ENCODE measurements at regions of chr12 and their contacts with region 1.

Region 1: DNA sequence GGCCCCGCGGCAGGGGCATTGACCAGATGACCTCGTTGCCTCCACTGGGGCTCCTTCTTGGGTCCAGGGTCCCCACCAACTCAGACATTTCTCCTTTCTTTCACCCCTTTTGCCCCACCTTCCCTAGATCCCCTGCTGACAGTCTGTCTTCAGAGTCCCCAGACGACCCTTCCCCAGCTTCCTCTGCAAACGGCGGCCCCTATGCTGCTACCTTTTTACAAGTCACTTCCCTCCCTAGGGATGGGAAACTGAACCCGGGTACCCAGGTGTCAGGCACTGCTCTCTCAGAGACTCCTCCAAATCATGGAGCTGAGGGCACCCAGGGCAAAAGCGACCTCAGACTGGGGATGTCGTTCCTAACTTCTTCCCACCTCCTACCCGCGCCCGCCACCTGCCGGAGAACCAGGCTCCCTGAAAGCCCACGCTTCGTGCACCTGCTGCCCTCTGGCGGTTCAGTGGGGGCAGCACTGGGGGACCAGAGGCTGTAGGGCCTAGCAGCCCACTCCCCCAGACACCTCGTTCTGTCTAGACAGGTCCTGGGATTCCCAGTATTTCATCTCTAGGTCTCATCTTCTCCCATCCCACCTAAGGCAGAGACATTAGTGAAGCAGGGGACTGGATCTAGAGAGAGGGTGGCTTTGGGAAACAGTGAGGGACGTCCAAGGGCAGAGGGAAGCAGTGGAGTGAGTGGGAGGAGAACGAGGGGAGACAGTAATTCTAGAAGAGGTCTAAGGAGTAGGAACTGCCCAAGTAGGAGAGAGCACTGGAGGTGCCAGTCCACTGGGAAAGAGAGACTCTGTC is 4.9 kb downstream of the ZNF385A start:
- DNase-seq: peak in 1 of 2 experiments; percentile 99
- H3K4me3 ChIP-seq: peak overlapping the region; percentile 30 to 54 (median 38); a peak in 6 of 8 replicates
- H3K27ac ChIP-seq: no peak overlapping the region
- H3K4me1 ChIP-seq: peaks cover 3 to 17% (median 12%) of the 10 kb centered on the region in 4 experiments
- H3K27me3 ChIP-seq: peaks cover 0 to 3% (median 1%) of the 10 kb centered on the region in 4 experiments; a peak in 2 of 7 replicates
- CTCF ChIP-seq: peak; percentile 100
- EP300 ChIP-seq: no peak
- POLR2A ChIP-seq: no peak
- RAD21 ChIP-seq: peak; percentile 84 to 90

Region 2: DNA sequence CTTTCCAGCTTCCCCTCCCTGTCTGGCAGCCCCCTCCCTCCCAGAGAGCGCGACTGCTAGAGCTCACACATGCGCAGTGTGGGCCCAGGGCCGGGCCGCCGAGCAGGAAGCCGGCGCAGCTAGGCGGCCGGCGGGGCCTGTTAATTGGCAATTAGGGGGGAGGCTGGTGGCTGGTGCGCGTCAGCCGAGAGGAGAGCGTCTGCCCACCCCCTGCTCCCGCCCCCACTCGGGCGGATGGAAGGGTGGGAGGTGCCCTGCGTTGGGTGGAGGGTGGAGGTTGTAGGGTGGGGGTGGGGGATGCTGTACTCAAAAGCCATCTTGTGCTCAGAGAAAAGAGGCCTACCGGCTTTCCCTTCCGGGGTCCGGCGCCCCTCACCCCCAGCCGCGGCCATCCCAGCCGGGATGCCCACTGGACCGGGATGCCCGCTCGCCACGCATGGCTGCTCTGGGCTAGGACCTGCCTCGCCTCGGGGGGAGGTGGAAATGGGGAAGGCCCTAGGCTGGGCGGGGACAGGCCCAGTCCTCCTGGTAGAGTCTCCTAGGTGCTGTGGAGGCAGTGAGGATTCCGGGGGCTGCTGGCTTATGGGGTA is 361.6 kb before region 1 on chr12:
- CTCF ChIA-PET with region 1: no interaction called
- POLR2A ChIA-PET with region 1: no interaction called
- DNase-seq: peak in 1 of 2 experiments; percentile 83
- H3K4me3 ChIP-seq: peak overlapping the region in 3 of 4 experiments; percentile 9 to 54 (median 26); a peak in 5 of 8 replicates
- H3K27ac ChIP-seq: no peak overlapping the region
- H3K4me1 ChIP-seq: peaks cover 0 to 12% (median 4%) of the 10 kb centered on the region in 4 experiments; a peak in 6 of 7 replicates
- H3K27me3 ChIP-seq: peaks cover 95 to 100% (median 100%) of the 10 kb centered on the region in 4 experiments
- CTCF ChIP-seq: no peak
- EP300 ChIP-seq: no peak
- POLR2A ChIP-seq: no peak
- RAD21 ChIP-seq: no peak

Region 3: GRCh38 chr12:54279866-54280467 is 99.6 kb before region 1 on chr12 and contains the start of gene CBX5:
- CTCF ChIA-PET with region 1: no interaction called
- POLR2A ChIA-PET with region 1: interaction called, 14 read pairs
- DNase-seq: peak; percentile 96 to 98
- H3K4me3 ChIP-seq: peak within 1 kb of the TSS; percentile 83 to 99 (median 96)
- H3K27ac ChIP-seq: peak within 1 kb of the TSS; percentile 99
- H3K4me1 ChIP-seq: peaks cover 0 to 12% (median 8%) of the 10 kb centered on the region in 4 experiments; a peak in 5 of 7 replicates
- H3K27me3 ChIP-seq: no peaks in the 10 kb centered on the region
- CTCF ChIP-seq: no peak
- EP300 ChIP-seq: 0 out of 3 replicates have a peak, but pooled peaks of 1 of the 2 experiments have one; percentile 26
- POLR2A ChIP-seq: peak; percentile 50 to 67; a peak in 2 of 3 replicates
- RAD21 ChIP-seq: no peak; a peak in 1 of 4 replicates
- total RNA-seq, gene CBX5: 217 and 231 TPM in 2 replicates

Region 4: GRCh38 chr12:54300732-54301427 is 78.7 kb before region 1 on chr12 and contains the start of gene NFE2:
- CTCF ChIA-PET with region 1: interaction called, 51 read pairs
- POLR2A ChIA-PET with region 1: no interaction called
- DNase-seq: peak; percentile 75 to 85
- H3K4me3 ChIP-seq: peak within 1 kb of the TSS; percentile 24 to 63 (median 46)
- H3K27ac ChIP-seq: peak within 1 kb of the TSS; percentile 75
- H3K4me1 ChIP-seq: peaks cover 12 to 32% (median 21%) of the 10 kb centered on the region in 4 experiments
- H3K27me3 ChIP-seq: peaks cover 0 to 7% (median 0%) of the 10 kb centered on the region in 4 experiments; a peak in 1 of 7 replicates
- CTCF ChIP-seq: peak in 2 of 3 experiments; percentile 21 to 35; a peak in 2 of 4 replicates
- EP300 ChIP-seq: no peak
- POLR2A ChIP-seq: peak in 1 of 2 experiments; percentile 67; a peak in 2 of 3 replicates
- RAD21 ChIP-seq: peak; percentile 8 to 17; a peak in 1 of 4 replicates
- total RNA-seq, gene NFE2: 1.4 and 2.0 TPM in 2 replicates

Region 5: DNA sequence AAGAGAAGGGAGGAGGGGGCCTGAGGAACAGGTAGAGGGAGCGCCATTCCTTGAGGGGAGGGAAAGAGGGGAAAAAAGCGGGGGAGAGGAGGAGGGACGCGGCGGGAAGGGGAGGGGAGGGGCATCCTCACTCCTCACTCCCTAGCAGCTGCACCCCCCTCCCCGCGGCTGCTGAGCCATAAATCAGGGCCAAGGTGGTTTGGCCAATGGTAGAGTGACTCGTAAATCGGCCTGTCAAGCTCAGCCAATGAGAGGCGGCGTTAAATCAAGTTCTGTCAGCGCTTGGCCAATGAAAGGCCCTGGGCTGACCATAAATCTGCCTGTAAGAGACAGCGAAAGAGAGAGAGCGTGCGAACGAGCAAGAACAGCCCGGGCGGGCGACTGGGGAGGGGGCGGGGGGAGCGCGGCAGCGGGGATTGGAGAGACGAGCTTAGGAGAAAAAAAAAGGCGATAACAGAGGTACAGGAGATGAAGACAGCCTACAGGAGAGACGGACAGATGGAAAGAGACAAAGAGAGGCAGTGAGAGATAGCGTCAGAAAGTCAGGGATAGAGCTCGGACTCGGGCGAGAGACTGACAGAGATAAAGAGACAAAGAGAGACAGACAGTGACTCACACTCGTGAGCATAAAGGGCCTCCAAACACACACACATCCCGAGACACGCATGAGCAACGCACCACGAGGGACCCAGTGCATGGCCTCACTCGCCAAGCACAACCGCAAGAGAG is 20.4 kb before region 1 on chr12:
- CTCF ChIA-PET with region 1: interaction called, 100 read pairs
- POLR2A ChIA-PET with region 1: interaction called, 14 read pairs
- DNase-seq: peak; percentile 89 to 98
- H3K4me3 ChIP-seq: peak overlapping the region; percentile 57 to 78 (median 74)
- H3K27ac ChIP-seq: peak overlapping the region; percentile 35; the same call in 1 of the 2 replicates
- H3K4me1 ChIP-seq: peaks cover 16 to 38% (median 20%) of the 10 kb centered on the region in 4 experiments
- H3K27me3 ChIP-seq: no peaks in the 10 kb centered on the region; a peak in 1 of 7 replicates
- CTCF ChIP-seq: no peak
- EP300 ChIP-seq: no peak; a peak in 1 of 3 replicates
- POLR2A ChIP-seq: 0 out of 3 replicates have a peak, but pooled peaks of 1 of the 2 experiments have one; percentile 8
- RAD21 ChIP-seq: no peak

Region 6: DNA sequence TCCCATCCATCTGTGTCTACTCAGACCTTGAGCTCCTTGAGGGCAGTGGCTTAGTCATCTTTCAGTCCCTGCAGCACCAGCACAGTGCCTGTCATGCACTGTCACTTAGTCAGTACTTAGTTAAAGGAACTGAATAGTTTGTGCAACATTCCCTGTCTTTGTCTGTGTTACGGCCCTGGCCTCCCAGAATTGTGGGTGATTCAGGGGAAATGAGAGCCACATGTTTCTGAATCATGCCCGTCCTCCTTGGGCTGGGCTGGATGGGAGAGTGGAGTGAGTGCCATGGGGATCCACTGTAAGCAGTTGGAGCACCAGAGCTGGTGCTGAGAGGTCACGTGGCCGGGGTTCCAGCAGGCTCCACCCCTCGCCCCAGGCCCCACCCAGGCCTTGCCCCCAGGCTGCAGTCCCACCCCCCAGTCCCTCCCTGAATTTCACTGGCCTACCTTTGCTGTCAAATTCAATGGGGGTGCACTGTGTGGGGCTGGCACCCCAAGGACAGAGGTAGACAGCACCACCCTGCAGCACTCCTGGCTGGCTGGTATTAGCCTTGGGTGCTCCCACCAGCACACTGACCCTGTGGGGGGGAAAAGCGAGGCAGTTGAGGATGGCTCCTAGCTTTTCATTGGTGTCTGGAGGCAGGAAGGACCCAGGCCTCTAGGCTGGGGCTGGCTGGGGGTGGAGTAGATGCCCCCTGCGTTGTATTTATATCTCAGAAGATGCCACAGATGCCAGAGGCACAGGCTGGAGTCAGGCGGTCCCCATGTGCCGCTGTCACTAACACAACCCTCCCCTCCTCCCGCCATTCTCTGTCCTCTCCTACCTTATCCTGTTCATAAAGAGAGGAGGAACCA is 32.0 kb after region 1 on chr12:
- CTCF ChIA-PET with region 1: interaction called, 20 read pairs
- POLR2A ChIA-PET with region 1: no interaction called
- DNase-seq: peak in 1 of 2 experiments; percentile 67
- H3K4me3 ChIP-seq: no peak overlapping the region
- H3K27ac ChIP-seq: no peak overlapping the region
- H3K4me1 ChIP-seq: peaks cover 0 to 7% (median 0%) of the 10 kb centered on the region in 4 experiments; a peak in 2 of 7 replicates
- H3K27me3 ChIP-seq: no peaks in the 10 kb centered on the region
- CTCF ChIP-seq: no peak
- EP300 ChIP-seq: no peak
- POLR2A ChIP-seq: no peak
- RAD21 ChIP-seq: no peak

Region 7: DNA sequence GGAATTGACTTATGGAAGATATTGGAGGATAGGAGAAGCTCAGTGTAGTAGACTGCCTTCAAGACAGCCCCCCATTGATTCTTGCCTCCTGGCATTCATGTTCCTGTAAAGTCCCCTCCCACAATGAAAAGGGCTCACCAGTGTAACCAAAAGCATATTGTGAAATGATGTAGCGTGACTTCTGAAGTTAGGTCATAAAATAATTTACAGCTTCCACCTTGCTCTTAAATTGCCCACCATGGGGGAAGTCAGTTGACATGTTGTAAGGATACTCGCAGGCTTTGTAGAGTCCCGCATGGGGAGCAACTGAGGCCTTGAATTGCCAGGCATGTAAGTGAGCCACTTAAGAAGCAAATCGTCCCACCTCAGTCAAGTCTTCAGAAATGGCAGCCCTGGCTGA is 68.7 kb after region 1 on chr12:
- CTCF ChIA-PET with region 1: interaction called, 11 read pairs
- POLR2A ChIA-PET with region 1: no interaction called
- DNase-seq: no peak
- H3K4me3 ChIP-seq: no peak overlapping the region
- H3K27ac ChIP-seq: no peak overlapping the region
- H3K4me1 ChIP-seq: no peaks in the 10 kb centered on the region
- H3K27me3 ChIP-seq: peaks cover 57 to 89% (median 76%) of the 10 kb centered on the region in 4 experiments
- CTCF ChIP-seq: no peak
- EP300 ChIP-seq: no peak
- POLR2A ChIP-seq: no peak
- RAD21 ChIP-seq: no peak

Measured in H1 (cell line).